ENCODE measurements at regions of chr5 and their contacts with region 1.

Region 1: DNA sequence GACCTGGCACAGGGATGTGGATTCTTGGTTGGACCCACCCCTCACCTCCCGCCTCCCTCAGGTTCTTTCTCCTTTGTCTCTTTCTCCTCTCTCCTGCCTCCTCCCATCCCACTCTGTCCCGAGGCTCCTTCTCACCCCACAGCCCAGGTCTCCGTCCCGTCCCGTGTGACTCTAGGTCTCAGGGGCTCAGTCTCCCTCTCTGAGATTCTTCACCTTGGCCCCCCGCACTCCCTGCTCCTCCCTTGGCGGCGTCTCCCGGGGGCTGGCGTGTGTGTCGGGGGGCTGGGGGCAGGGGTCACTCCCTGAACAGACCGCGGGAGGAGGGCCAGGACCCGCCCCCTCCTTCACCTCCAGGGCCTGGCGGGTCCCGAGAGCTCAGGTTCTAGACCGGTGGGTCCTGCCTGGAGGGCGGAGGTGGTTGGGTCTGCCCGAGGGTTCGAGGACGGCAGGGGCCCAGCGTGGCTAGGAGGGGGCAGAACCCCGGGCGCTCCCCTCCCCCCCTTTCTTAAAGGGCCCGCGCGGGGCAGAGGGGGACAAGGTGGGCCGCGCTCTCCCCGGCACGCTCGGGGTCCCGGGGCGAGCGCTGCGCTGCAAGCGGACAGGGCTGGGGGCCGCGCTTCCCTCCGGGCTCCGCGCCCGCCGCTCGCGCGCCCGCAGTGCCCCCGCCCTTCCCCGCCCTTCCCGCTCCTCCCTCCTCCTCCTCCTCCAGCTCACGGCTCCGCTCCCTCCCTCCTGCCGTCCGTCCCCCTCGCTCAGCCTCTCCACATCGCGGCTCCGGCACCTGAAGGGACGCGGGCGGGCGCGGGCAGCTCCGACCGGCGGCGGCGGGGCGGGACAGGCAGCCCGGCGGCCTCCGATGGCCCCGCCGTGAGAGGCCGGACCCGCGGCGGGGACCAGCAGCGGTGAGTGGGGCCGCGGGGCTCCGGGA is at the start of gene PSD2:
- DNase-seq: peak in 5 of 14 experiments; percentile 12 to 52 (median 41)
- ATAC-seq: peak; percentile 57
- H3K4me3 ChIP-seq: no peak within 1 kb of the TSS
- H3K4me3 Mint-ChIP-seq: peak within 1 kb of the TSS; percentile 70
- H3K27ac ChIP-seq: no peak within 1 kb of the TSS
- H3K27ac Mint-ChIP-seq: no peak within 1 kb of the TSS
- H3K4me1 ChIP-seq: peaks cover 15% of the 10 kb centered on the region
- H3K4me1 Mint-ChIP-seq: peaks cover 13% of the 10 kb centered on the region
- H3K27me3 ChIP-seq: peaks cover 44 to 61% of the 10 kb centered on the region in 2 experiments
- H3K27me3 Mint-ChIP-seq: peaks cover 75% of the 10 kb centered on the region
- CTCF ChIP-seq: no peak
- total RNA-seq, gene PSD2: 0.08 TPM in 1 of 2 experiments, not detected in the other

Region 2: GRCh38 chr5:139844472-139845145 is 49.3 kb after region 1 on chr5:
- CTCF ChIA-PET with region 1: no interaction called
- POLR2A ChIA-PET with region 1: no interaction called
- intact Hi-C with region 1: loop called in 1 of 2 experiments (anchors 2 kb)
- DNase-seq: peak; percentile 45 to 81 (median 66)
- ATAC-seq: no peak
- H3K4me3 ChIP-seq: no peak overlapping the region
- H3K4me3 Mint-ChIP-seq: peak overlapping the region; percentile 74
- H3K27ac ChIP-seq: no peak overlapping the region
- H3K27ac Mint-ChIP-seq: no peak overlapping the region
- H3K4me1 ChIP-seq: peaks cover 15% of the 10 kb centered on the region
- H3K4me1 Mint-ChIP-seq: peaks cover 17% of the 10 kb centered on the region
- H3K27me3 ChIP-seq: peaks cover 12 to 21% of the 10 kb centered on the region in 2 experiments
- H3K27me3 Mint-ChIP-seq: peaks cover 38% of the 10 kb centered on the region
- CTCF ChIP-seq: peak; percentile 70

Measured in CD4-positive, alpha-beta T cell (primary cell).